Prostate gland (tissue), 2 donors: ENCODE measurements at regions of chr15 and their contacts with region 1.

Region 1: DNA sequence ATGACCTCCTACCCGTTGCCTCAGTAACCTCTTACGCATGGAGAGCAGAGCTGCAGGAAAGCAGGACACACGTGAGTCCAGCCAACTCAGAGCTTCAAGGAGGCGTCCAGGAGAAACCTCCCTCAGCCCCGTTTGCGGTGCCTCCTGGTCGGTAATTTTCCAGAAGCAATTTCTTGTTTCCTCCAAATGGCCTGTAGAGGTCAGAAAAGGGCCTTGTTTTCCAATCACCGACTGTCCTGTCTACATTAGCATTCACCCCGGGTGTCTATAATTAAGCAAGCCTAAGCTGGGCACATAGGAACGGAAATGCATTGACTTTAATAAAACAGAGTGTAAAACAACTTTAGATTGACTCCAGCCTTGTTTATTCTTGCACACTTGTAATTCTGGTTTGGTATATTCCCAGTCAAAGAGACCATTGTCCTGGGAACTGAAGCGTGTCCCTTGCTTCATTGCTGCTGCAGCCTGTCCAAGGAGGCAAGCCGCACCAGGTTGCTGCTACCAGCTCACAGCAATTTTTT is 836.2 kb downstream of the AGBL1 start:
- DNase-seq: peak; percentile 33
- H3K4me3 ChIP-seq: no peak overlapping the region
- H3K27ac ChIP-seq: no peak overlapping the region
- H3K4me1 ChIP-seq: no peaks in the 10 kb centered on the region
- H3K27me3 ChIP-seq: no peaks in the 10 kb centered on the region
- CTCF ChIP-seq: peak in 3 of 4 experiments; percentile 42 to 66 (median 44)
- POLR2A ChIP-seq: no peak

Region 2: GRCh38 chr15:88274553-88275460 is 1358.9 kb after region 1 on chr15:
- intact Hi-C with region 1: loop called (anchors 10 kb)
- DNase-seq: peak; percentile 37
- H3K4me3 ChIP-seq: no peak overlapping the region
- H3K27ac ChIP-seq: no peak overlapping the region
- H3K4me1 ChIP-seq: no peaks in the 10 kb centered on the region
- H3K27me3 ChIP-seq: no peaks in the 10 kb centered on the region
- CTCF ChIP-seq: peak; percentile 23 to 85 (median 72)
- POLR2A ChIP-seq: no peak